Activated CD4-positive, alpha-beta T cell treated with anti-CD3 and anti-CD28 coated beads, Interleukin-2, amount 10 ng/mL, durations not matched to agents 24 days and 14 days (primary cell): ENCODE measurements at regions of chr14 and their contacts with region 1.

Region 1: GRCh38 chr14:68795597-68796417 is 2.9 kb upstream of the ZFP36L1 start:
- DNase-seq: peak; percentile 95
- H3K4me3 Mint-ChIP-seq: peak overlapping the region; percentile 93
- H3K27ac Mint-ChIP-seq: peak overlapping the region; percentile 100
- H3K4me1 Mint-ChIP-seq: peaks cover 39% of the 10 kb centered on the region
- H3K27me3 Mint-ChIP-seq: no peaks in the 10 kb centered on the region

Region 2: DNA sequence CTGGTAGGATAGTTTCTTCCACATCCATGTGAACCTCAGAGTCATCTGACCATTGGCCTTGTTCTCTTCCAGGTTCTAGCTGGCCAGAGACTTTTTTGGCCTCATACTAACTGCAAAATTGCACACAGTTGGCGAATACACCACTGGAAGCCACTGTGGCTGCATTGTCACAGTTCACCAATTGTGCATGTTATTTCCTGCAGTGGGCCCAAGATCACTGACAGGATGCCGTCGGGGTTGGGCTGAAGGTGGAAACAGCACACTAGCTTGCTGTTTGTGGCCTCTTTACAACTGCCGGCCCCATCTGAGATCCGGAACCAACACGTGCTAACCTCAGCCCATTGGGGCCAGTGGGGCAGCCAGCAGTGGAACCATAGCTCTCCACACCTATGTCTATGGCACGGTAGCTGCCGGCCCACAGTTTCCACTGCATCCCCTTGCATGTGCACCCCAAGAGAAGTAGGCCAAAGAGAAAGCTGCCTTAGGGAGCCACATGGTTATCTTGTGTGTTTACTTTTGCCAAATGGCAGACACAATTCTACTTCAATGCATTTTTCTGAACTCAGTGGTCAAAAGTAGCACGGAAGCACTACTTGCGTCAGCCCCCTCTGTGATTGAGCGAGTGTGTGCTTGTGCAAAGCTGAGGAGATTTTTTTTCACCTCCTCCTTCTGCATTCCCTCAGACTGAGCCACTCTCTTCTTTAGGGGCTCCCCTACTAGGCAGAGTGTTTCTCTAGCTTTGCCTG is 512.3 kb before region 1 on chr14:
- intact Hi-C with region 1: loop called (anchors 1 kb)
- DNase-seq: peak; percentile 88
- H3K4me3 Mint-ChIP-seq: peak overlapping the region; percentile 62
- H3K27ac Mint-ChIP-seq: peak overlapping the region; percentile 83
- H3K4me1 Mint-ChIP-seq: peaks cover 57% of the 10 kb centered on the region
- H3K27me3 Mint-ChIP-seq: no peaks in the 10 kb centered on the region

Region 3: DNA sequence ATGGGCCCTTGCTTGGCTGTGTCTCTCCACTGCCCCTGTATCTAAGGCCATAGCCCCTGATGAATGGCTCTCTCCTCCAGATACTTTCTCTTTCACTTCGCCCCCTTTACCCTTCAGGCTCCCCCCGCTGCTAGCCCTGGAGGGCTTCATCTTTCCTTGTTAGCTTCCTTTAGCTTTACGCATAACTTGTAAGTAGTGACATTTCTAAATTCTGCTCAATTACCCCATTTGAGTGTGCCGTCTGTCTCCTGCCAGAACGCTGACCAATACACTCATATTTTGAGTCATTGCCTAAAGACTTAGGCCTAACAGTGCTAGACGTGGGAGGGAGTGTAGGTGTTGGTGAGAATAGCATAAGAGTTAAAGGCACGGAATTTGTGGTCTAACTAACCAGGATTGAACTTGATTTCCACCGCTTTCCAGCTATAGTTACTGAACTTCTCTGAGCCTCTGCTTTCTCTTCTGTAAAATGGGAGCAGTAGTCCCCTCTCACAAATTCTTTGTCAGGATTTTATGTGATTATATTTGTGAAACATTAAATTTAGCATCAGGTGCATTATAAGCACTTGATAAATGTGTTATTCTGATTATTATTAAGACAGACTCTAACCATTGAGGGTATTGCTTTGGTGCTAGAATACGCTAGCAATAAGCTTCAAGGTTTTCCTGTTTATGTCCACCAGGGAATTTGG is 132.3 kb before region 1 on chr14:
- intact Hi-C with region 1: loop called (anchors 1 kb)
- DNase-seq: peak; percentile 77
- H3K4me3 Mint-ChIP-seq: peak overlapping the region; percentile 55
- H3K27ac Mint-ChIP-seq: peak overlapping the region; percentile 59
- H3K4me1 Mint-ChIP-seq: peaks cover 36% of the 10 kb centered on the region
- H3K27me3 Mint-ChIP-seq: peaks cover 4% of the 10 kb centered on the region

Region 4: GRCh38 chr14:68718023-68718995 is 77.5 kb before region 1 on chr14:
- intact Hi-C with region 1: loop called (anchors 1 kb)
- DNase-seq: no peak
- H3K4me3 Mint-ChIP-seq: no peak overlapping the region
- H3K27ac Mint-ChIP-seq: no peak overlapping the region
- H3K4me1 Mint-ChIP-seq: peaks cover 46% of the 10 kb centered on the region
- H3K27me3 Mint-ChIP-seq: peaks cover 2% of the 10 kb centered on the region

Region 5: DNA sequence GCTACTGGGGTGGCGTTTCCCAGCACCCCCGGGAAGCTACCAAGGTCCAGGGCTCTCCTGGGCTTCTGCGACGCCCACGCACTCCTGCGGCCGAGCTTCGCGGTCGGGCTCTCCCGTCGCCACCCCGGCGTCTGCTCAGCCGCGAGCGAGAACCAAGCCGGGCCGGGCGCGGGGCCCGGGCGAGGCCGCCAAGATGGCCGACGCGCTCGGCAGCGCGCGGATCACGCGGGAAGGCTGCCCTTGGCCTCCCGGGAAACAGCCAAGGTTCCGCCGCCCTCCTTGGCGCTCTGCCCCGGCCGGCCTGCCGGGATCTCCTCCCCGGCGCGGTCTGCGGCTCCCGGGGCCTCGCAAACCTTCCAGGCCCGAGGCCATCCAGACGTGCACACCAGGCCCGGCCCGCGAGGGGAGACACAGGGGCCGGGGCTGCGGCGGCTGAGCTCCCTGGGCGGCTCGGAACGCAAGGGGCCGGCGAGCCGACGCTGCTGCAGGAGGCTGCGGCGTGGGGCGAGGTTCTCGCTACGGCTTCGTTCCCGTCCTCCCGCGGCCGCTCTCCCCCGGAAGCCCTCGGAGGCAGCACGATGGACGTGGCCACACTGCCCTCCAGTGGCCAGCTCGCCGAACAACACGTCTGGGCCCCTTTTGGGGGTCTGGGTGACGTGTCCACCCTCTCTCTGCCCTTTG is 20.6 kb after region 1 on chr14:
- intact Hi-C with region 1: loop called (anchors 1 kb)
- DNase-seq: peak; percentile 97
- H3K4me3 Mint-ChIP-seq: peak overlapping the region; percentile 79
- H3K27ac Mint-ChIP-seq: peak overlapping the region; percentile 90
- H3K4me1 Mint-ChIP-seq: peaks cover 56% of the 10 kb centered on the region
- H3K27me3 Mint-ChIP-seq: no peaks in the 10 kb centered on the region

Region 6: GRCh38 chr14:68979021-68979782 is 183.4 kb after region 1 on chr14 and contains the start of gene ACTN1:
- intact Hi-C with region 1: loop called (anchors 5 kb)
- DNase-seq: peak; percentile 84
- H3K4me3 Mint-ChIP-seq: peak within 1 kb of the TSS; percentile 85
- H3K27ac Mint-ChIP-seq: peak within 1 kb of the TSS; percentile 62
- H3K4me1 Mint-ChIP-seq: peaks cover 26% of the 10 kb centered on the region
- H3K27me3 Mint-ChIP-seq: peaks cover 29% of the 10 kb centered on the region
- total RNA-seq, gene ACTN1: 44.9 and 52.6 TPM in 2 replicates